H1 (cell line): ENCODE measurements at regions of chr3 and their contacts with region 1.

Region 1: GRCh38 chr3:25648107-25648535 is 16.6 kb downstream of the TOP2B start:
- DNase-seq: peak; percentile 63 to 94
- H3K4me3 ChIP-seq: no peak overlapping the region
- H3K27ac ChIP-seq: no peak overlapping the region
- H3K4me1 ChIP-seq: peaks cover 0 to 6% (median 2%) of the 10 kb centered on the region in 4 experiments; a peak in 3 of 7 replicates
- H3K27me3 ChIP-seq: no peaks in the 10 kb centered on the region
- CTCF ChIP-seq: peak in 2 of 3 experiments; percentile 97 to 98; a peak in 3 of 4 replicates
- EP300 ChIP-seq: no peak
- POLR2A ChIP-seq: no peak
- RAD21 ChIP-seq: peak; percentile 96 to 99

Region 2: DNA sequence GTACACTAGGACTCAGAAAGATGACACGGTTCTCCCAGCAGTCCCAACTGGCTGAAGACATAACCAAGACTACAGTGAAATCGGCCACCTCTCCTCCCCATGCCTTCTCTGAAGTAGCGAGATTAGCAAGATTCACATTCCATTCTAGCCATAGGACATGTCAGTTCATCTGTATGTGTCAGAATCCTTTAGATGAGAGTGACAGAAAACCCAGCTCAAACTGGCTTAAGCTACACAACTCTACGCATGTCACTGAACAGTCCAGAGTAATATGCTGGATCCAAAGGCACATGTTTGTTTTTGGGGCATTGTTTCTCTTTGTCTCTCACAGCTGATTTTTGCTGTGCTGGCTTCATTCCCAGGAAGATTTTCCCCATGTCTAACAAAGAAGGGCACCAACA is 144.2 kb before region 1 on chr3:
- CTCF ChIA-PET with region 1: no interaction called
- POLR2A ChIA-PET with region 1: no interaction called
- DNase-seq: no peak
- H3K4me3 ChIP-seq: no peak overlapping the region
- H3K27ac ChIP-seq: no peak overlapping the region
- H3K4me1 ChIP-seq: no peaks in the 10 kb centered on the region; a peak in 1 of 7 replicates
- H3K27me3 ChIP-seq: no peaks in the 10 kb centered on the region
- CTCF ChIP-seq: no peak
- EP300 ChIP-seq: no peak
- POLR2A ChIP-seq: no peak
- RAD21 ChIP-seq: no peak

Region 3: GRCh38 chr3:25542492-25543039 is 105.6 kb before region 1 on chr3:
- CTCF ChIA-PET with region 1: no interaction called
- POLR2A ChIA-PET with region 1: no interaction called
- DNase-seq: no peak
- H3K4me3 ChIP-seq: no peak overlapping the region
- H3K27ac ChIP-seq: no peak overlapping the region
- H3K4me1 ChIP-seq: no peaks in the 10 kb centered on the region
- H3K27me3 ChIP-seq: no peaks in the 10 kb centered on the region
- CTCF ChIP-seq: no peak
- EP300 ChIP-seq: no peak
- POLR2A ChIP-seq: no peak
- RAD21 ChIP-seq: no peak

Region 4: DNA sequence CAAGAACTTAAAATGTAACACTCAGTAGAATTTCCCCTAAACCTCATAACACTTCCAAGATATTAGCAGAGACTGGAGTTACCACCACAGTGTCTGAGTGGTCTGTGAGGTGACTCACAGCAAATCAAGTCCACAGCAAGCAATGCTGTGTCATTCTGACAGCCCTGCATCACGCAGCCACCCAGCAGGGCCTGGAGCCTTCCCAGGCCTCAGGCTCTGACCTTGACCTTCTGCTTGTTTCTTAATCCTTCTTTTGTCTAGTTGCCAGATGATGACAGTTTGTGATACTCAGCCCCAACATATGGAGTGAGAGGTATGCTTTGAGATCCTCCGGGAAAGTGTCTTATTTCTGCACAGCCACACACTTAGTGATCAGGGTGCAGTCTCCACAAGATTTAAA is 65.9 kb before region 1 on chr3:
- CTCF ChIA-PET with region 1: no interaction called
- POLR2A ChIA-PET with region 1: no interaction called
- DNase-seq: no peak
- H3K4me3 ChIP-seq: no peak overlapping the region
- H3K27ac ChIP-seq: no peak overlapping the region
- H3K4me1 ChIP-seq: no peaks in the 10 kb centered on the region
- H3K27me3 ChIP-seq: no peaks in the 10 kb centered on the region
- CTCF ChIP-seq: no peak
- EP300 ChIP-seq: no peak
- POLR2A ChIP-seq: no peak
- RAD21 ChIP-seq: no peak

Region 5: DNA sequence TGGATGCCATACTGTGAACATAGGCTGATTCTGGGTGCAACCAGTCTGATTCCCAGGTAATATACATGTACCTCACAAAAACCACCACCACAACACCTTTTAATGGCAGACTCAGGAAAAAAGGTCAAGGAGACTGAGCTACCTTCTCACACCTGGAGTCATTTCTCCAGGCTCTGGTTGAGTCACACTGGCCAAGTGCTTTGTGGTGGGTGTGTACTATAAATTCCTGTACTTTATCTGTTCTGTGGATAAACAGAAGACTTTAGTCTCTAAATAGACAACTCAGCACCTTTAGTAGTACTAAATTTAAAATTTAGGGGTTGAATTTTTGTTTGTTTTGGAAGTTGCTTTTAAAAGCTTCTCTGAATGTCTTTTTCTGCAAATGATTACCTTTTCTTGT is 30.1 kb before region 1 on chr3:
- CTCF ChIA-PET with region 1: no interaction called
- POLR2A ChIA-PET with region 1: no interaction called
- DNase-seq: no peak
- H3K4me3 ChIP-seq: no peak overlapping the region
- H3K27ac ChIP-seq: no peak overlapping the region
- H3K4me1 ChIP-seq: no peaks in the 10 kb centered on the region
- H3K27me3 ChIP-seq: no peaks in the 10 kb centered on the region
- CTCF ChIP-seq: no peak
- EP300 ChIP-seq: no peak
- POLR2A ChIP-seq: no peak
- RAD21 ChIP-seq: no peak

Region 6: DNA sequence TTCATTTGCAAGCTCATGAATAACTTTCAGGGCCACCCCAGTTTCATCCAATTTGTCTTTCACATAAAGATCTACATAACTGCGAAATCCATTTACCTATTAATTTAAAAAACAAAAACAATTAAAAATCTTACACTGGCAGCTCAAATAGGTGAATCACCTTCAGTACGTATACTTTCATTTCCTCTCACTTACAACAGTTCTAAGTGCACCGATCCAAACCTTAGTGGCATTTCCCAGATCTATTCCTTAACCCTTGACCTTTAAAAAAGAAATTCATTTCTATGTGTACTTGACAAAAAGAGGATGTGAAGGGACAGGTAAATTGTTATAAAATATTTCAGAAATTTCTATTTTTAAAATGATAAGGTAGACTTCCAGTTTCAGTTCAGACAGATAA is 14.2 kb before region 1 on chr3:
- CTCF ChIA-PET with region 1: interaction called, 11 read pairs
- POLR2A ChIA-PET with region 1: no interaction called
- DNase-seq: no peak
- H3K4me3 ChIP-seq: no peak overlapping the region
- H3K27ac ChIP-seq: no peak overlapping the region
- H3K4me1 ChIP-seq: no peaks in the 10 kb centered on the region; a peak in 2 of 7 replicates
- H3K27me3 ChIP-seq: no peaks in the 10 kb centered on the region
- CTCF ChIP-seq: no peak
- EP300 ChIP-seq: no peak
- POLR2A ChIP-seq: no peak
- RAD21 ChIP-seq: no peak

Region 7: GRCh38 chr3:25664810-25665314 is 16.7 kb after region 1 on chr3 and contains the start of gene TOP2B:
- CTCF ChIA-PET with region 1: interaction called, 22 read pairs
- POLR2A ChIA-PET with region 1: no interaction called
- DNase-seq: peak; percentile 90 to 93
- H3K4me3 ChIP-seq: peak within 1 kb of the TSS; percentile 60 to 86 (median 77)
- H3K27ac ChIP-seq: peak within 1 kb of the TSS; percentile 94
- H3K4me1 ChIP-seq: peaks cover 0 to 11% (median 6%) of the 10 kb centered on the region in 4 experiments; a peak in 4 of 7 replicates
- H3K27me3 ChIP-seq: no peaks in the 10 kb centered on the region
- CTCF ChIP-seq: no peak
- EP300 ChIP-seq: no peak
- POLR2A ChIP-seq: peak in 1 of 2 experiments; percentile 82
- RAD21 ChIP-seq: no peak
- total RNA-seq, gene TOP2B: 188 and 206 TPM in 2 replicates

Region 8: DNA sequence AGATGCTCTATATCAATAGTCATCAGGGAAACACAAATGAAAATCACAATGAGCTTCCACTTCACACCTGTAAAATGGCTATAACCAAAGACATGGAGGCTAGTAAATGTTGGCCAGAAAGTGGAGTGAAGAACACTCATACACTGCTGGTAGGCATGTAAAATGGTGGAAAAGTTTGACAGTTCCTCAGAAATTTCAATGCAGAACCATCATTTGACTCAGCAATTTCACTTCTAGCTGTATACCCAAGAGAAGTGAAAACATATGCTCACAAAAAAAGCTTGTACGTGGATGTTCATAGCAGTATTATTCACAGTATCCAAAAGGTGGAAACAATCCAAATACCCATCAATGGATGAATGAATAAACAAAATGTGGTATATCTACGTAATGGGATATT is 35.8 kb after region 1 on chr3:
- CTCF ChIA-PET with region 1: interaction called, 14 read pairs
- POLR2A ChIA-PET with region 1: no interaction called
- DNase-seq: no peak
- H3K4me3 ChIP-seq: no peak overlapping the region
- H3K27ac ChIP-seq: no peak overlapping the region
- H3K4me1 ChIP-seq: no peaks in the 10 kb centered on the region
- H3K27me3 ChIP-seq: no peaks in the 10 kb centered on the region
- CTCF ChIP-seq: no peak
- EP300 ChIP-seq: no peak
- POLR2A ChIP-seq: no peak
- RAD21 ChIP-seq: no peak

Region 9: GRCh38 chr3:25831578-25831977 is 183.5 kb after region 1 on chr3:
- CTCF ChIA-PET with region 1: interaction called, 14 read pairs
- POLR2A ChIA-PET with region 1: no interaction called
- DNase-seq: no peak
- H3K4me3 ChIP-seq: no peak overlapping the region
- H3K27ac ChIP-seq: no peak overlapping the region
- H3K4me1 ChIP-seq: peaks cover 0 to 2% (median 0%) of the 10 kb centered on the region in 4 experiments; a peak in 1 of 7 replicates
- H3K27me3 ChIP-seq: no peaks in the 10 kb centered on the region
- CTCF ChIP-seq: peak in 2 of 3 experiments; percentile 16 to 26; a peak in 2 of 4 replicates
- EP300 ChIP-seq: no peak
- POLR2A ChIP-seq: no peak
- RAD21 ChIP-seq: peak; percentile 42 to 43

Region 10: DNA sequence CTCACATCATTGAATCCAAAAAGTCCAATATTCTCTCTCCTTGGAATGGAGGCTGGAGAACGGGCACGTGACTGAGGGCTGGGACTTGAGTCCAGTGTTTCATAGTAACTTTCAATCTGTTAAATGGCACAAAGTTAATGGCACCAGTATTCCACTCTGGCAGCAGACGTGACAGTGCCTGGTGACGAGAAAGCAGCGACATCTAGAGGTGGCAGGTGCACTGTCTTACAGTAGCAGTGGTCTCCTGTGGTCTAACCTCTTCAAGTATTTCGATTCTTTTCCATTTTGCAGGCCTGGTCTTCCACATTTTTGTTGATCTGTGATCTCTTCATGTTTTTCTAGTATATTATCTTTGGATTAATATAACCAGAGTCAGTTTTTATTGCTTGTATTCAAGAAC is 248.9 kb after region 1 on chr3:
- CTCF ChIA-PET with region 1: interaction called, 16 read pairs
- POLR2A ChIA-PET with region 1: no interaction called
- DNase-seq: peak in 1 of 2 experiments; percentile 61
- H3K4me3 ChIP-seq: no peak overlapping the region
- H3K27ac ChIP-seq: no peak overlapping the region
- H3K4me1 ChIP-seq: peaks cover 0 to 3% (median 0%) of the 10 kb centered on the region in 4 experiments; a peak in 1 of 7 replicates
- H3K27me3 ChIP-seq: no peaks in the 10 kb centered on the region
- CTCF ChIP-seq: peak; percentile 78 to 92 (median 92)
- EP300 ChIP-seq: no peak
- POLR2A ChIP-seq: no peak
- RAD21 ChIP-seq: peak; percentile 78 to 84